ENCODE measurements at regions of chr7 and their contacts with region 1.

Region 1: GRCh38 chr7:28685644-28686417 is 272.3 kb downstream of the TRIL start:
- DNase-seq: peak; percentile 78 to 99
- ATAC-seq: peak; percentile 92 to 96 (median 95)
- H3K4me3 ChIP-seq: peak overlapping the region; percentile 40 to 69 (median 56)
- H3K27ac ChIP-seq: peak overlapping the region; percentile 59 to 96 (median 87)
- H3K4me1 ChIP-seq: peaks cover 3 to 69% (median 38%) of the 10 kb centered on the region in 9 donors
- H3K27me3 ChIP-seq: no peaks in the 10 kb centered on the region
- CTCF ChIP-seq: no peak

Region 2: GRCh38 chr7:28626624-28627262 is 59.1 kb before region 1 on chr7:
- intact Hi-C with region 1: loop called in 6 of 10 experiments (anchors 5 to 10 kb)
- DNase-seq: no peak
- ATAC-seq: peak in 1 of 8 donors; percentile 46
- H3K4me3 ChIP-seq: no peak overlapping the region
- H3K27ac ChIP-seq: peak overlapping the region in 5 of 10 donors; percentile 0 to 63 (median 1)
- H3K4me1 ChIP-seq: peaks cover 0 to 84% (median 42%) of the 10 kb centered on the region in 9 donors
- H3K27me3 ChIP-seq: no peaks in the 10 kb centered on the region
- CTCF ChIP-seq: peak; percentile 28 to 79 (median 71)

Region 3: GRCh38 chr7:28748933-28749584 is 63.2 kb after region 1 on chr7:
- intact Hi-C with region 1: loop called in 1 of 10 experiments (anchors 5 kb)
- DNase-seq: no peak
- ATAC-seq: peak in 1 of 8 donors; percentile 77
- H3K4me3 ChIP-seq: no peak overlapping the region
- H3K27ac ChIP-seq: no peak overlapping the region
- H3K4me1 ChIP-seq: peaks cover 2 to 44% (median 25%) of the 10 kb centered on the region in 9 donors
- H3K27me3 ChIP-seq: no peaks in the 10 kb centered on the region
- CTCF ChIP-seq: no peak

Region 4: GRCh38 chr7:28759475-28759971 is 73.7 kb after region 1 on chr7:
- intact Hi-C with region 1: no loop called
- DNase-seq: no peak
- ATAC-seq: no peak
- H3K4me3 ChIP-seq: no peak overlapping the region
- H3K27ac ChIP-seq: no peak overlapping the region
- H3K4me1 ChIP-seq: peaks cover 0 to 9% (median 0%) of the 10 kb centered on the region in 9 donors
- H3K27me3 ChIP-seq: no peaks in the 10 kb centered on the region
- CTCF ChIP-seq: no peak